Activated naive CD8-positive, alpha-beta T cell treated with anti-CD3 and anti-CD28 coated beads, Interleukin-2, amount 10 ng/mL, durations not matched to agents 7 days and 5 days (primary cell): ENCODE measurements at regions of chr11 and their contacts with region 1.

Region 1: DNA sequence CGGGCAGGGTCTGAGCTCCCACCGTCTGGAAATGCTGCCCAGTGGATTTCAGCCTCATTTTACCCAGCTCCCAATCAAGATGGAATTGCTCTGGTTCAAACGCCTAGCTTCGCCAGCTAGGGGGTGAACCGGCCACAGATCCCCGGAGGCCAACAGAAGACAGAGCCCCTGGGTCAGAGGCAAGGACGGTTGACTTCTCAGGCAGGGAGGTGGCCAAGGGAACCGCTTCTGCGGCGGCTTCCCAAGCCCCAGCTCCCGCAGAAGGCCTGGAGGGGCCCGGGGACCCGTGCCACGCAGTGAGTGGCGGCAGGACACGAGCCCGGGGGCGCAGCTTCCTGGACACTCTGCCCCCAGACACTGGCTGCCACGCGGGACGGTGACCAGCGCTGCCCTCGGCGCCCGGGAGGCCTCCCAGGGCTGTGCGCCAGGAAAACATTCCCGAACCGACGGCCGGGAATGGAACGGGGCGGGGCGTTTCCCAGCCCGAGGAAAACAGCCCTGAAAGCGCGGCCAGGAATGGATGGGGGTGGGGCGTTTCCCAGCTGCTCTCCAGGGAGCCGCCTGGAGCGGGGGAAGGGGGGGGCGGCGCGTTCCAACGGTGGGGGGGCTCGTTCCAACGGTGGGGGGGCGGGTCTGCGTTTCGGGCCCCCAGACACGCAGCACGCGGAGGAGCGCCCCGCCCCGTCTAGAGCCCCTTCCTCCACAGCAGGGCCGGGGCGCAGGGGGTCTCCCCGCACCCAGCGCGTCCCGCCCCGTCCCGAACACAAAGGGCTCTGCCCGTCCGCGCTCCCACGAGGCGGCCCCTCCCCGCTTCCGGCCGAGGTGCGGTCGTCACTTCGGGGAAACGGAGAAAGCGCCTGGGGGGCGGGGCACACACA is 13.5 kb upstream of the B4GALNT4 start:
- DNase-seq: peak; percentile 94
- ATAC-seq: peak; percentile 74
- H3K4me3 Mint-ChIP-seq: peak overlapping the region; percentile 89
- H3K27ac Mint-ChIP-seq: peak overlapping the region; percentile 92
- H3K4me1 Mint-ChIP-seq: peaks cover 39% of the 10 kb centered on the region
- H3K27me3 Mint-ChIP-seq: peaks cover 5% of the 10 kb centered on the region

Region 2: DNA sequence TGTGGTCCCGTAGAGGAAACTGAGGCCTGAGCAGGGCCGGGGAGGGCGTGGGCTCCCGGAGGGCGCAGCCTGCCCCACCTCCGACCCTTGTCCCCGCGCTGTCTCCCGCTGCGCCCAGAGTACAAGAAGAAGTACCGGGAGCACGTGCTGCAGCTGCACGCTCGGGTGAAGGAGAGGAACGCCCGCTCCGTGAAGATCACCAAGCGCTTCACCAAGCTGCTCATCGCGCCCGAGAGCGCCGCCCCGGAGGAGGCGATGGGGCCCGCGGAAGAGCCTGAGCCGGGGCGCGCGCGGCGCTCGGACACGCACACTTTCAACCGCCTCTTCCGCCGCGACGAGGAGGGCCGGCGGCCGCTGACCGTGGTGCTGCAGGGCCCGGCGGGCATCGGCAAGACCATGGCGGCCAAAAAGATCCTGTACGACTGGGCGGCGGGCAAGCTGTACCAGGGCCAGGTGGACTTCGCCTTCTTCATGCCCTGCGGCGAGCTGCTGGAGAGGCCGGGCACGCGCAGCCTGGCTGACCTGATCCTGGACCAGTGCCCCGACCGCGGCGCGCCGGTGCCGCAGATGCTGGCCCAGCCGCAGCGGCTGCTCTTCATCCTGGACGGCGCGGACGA is 75.7 kb before region 1 on chr11:
- POLR2A ChIA-PET with region 1: interaction called, 20 read pairs
- DNase-seq: peak; percentile 69
- ATAC-seq: peak; percentile 31
- H3K4me3 Mint-ChIP-seq: peak overlapping the region; percentile 89
- H3K27ac Mint-ChIP-seq: peak overlapping the region; percentile 95
- H3K4me1 Mint-ChIP-seq: peaks cover 32% of the 10 kb centered on the region
- H3K27me3 Mint-ChIP-seq: no peaks in the 10 kb centered on the region

Region 3: GRCh38 chr11:299951-300735 is 55.7 kb before region 1 on chr11:
- POLR2A ChIA-PET with region 1: interaction called, 35 read pairs
- DNase-seq: peak; percentile 57
- ATAC-seq: no peak
- H3K4me3 Mint-ChIP-seq: peak overlapping the region; percentile 44
- H3K27ac Mint-ChIP-seq: peak overlapping the region; percentile 58
- H3K4me1 Mint-ChIP-seq: peaks cover 52% of the 10 kb centered on the region
- H3K27me3 Mint-ChIP-seq: peaks cover 8% of the 10 kb centered on the region

Region 4: DNA sequence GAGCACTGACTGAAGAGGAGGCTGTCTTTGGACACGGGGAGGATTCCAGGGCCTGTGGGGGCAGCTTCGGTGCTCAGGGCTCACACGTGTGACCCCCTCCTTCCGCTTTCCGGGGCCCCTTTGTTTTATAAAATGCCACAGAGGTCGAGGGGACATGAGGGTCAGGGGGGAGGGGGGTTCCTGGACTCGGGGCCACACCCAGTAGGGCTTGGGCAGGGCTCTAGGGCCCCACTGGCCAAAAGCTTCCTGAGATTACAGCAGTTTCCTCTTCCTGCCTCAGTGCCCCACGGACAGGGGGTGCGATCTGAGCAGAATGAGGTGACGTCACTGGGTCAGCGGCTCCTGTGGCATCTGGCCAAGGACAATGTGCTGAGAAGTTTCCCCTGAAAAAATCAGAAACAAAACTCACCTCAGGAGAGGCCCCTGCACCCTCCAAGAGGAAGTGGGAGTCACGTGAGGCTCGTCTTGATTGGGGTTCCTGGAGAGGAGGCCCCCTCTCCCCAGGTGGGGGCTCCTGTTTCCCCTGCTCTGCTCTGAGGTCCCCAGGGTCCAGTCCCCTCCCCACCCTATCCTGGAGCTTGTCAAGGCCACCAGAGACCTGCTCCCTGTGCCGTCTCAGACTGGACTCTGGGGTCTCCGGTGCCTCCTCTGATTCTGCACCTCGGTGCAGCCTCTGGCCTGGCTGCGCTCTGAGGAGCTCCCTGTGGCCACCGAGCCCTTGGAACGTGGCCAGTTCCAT is 28.8 kb before region 1 on chr11:
- POLR2A ChIA-PET with region 1: interaction called, 71 read pairs
- DNase-seq: peak; percentile 77
- ATAC-seq: peak; percentile 62
- H3K4me3 Mint-ChIP-seq: peak overlapping the region; percentile 86
- H3K27ac Mint-ChIP-seq: peak overlapping the region; percentile 100
- H3K4me1 Mint-ChIP-seq: peaks cover 68% of the 10 kb centered on the region
- H3K27me3 Mint-ChIP-seq: no peaks in the 10 kb centered on the region

Region 5: DNA sequence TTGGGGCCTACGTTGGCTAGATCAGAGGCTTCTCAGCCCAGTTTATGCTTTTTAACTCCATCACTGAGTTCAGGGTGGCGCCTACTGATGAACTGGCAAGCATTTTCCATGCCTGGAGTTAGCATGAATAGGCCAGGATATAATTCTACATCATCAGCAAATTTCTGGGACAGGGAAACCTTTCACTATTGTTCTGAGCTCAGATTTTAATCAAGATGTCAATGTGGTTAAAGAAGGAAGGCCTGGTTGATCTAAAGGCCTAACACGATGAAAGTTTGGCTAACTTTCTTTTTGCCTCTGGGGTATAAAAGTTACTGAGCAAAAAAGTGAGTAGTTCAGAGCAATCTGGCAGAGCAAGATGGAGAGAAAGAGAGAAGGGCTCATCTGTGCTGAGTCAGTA is 13.5 kb before region 1 on chr11:
- POLR2A ChIA-PET with region 1: interaction called, 17 read pairs
- DNase-seq: no peak
- ATAC-seq: no peak
- H3K4me3 Mint-ChIP-seq: no peak overlapping the region
- H3K27ac Mint-ChIP-seq: no peak overlapping the region
- H3K4me1 Mint-ChIP-seq: peaks cover 10% of the 10 kb centered on the region
- H3K27me3 Mint-ChIP-seq: peaks cover 3% of the 10 kb centered on the region

Region 6: GRCh38 chr11:534396-535209 is 178.8 kb after region 1 on chr11:
- POLR2A ChIA-PET with region 1: no interaction called
- DNase-seq: peak; percentile 64
- ATAC-seq: peak; percentile 1
- H3K4me3 Mint-ChIP-seq: peak overlapping the region; percentile 78
- H3K27ac Mint-ChIP-seq: no peak overlapping the region
- H3K4me1 Mint-ChIP-seq: peaks cover 7% of the 10 kb centered on the region
- H3K27me3 Mint-ChIP-seq: no peaks in the 10 kb centered on the region